ENCODE measurements at regions of chr5 and their contacts with region 1.

Region 1: GRCh38 chr5:176810084-176810597 is at the start of gene UNC5A:
- DNase-seq: no peak
- ATAC-seq: peak; percentile 71
- H3K4me3 ChIP-seq: peak within 1 kb of the TSS; percentile 38 to 48
- H3K27ac ChIP-seq: no peak within 1 kb of the TSS
- H3K4me1 ChIP-seq: peaks cover 7% of the 10 kb centered on the region
- H3K27me3 ChIP-seq: peaks cover 15% of the 10 kb centered on the region
- CTCF ChIP-seq: no peak
- total RNA-seq, gene UNC5A: 0.13 TPM

Region 2: GRCh38 chr5:176959051-176959450 is 148.9 kb after region 1 on chr5:
- CTCF ChIA-PET with region 1: no interaction called
- POLR2A ChIA-PET with region 1: no interaction called
- in situ Hi-C with region 1: no loop called
- intact Hi-C with region 1: loop called (anchors 5 kb)
- DNase-seq: no peak
- ATAC-seq: peak; percentile 69; the same call in 1 of the 2 replicates
- H3K4me3 ChIP-seq: no peak overlapping the region
- H3K27ac ChIP-seq: no peak overlapping the region
- H3K4me1 ChIP-seq: no peaks in the 10 kb centered on the region
- H3K27me3 ChIP-seq: no peaks in the 10 kb centered on the region
- CTCF ChIP-seq: peak; percentile 60